Lower leg skin (tissue), 4 donors: ENCODE measurements at regions of chr19 and their contacts with region 1.

Region 1: GRCh38 chr19:19647037-19647835 is 3.8 kb upstream of the GMIP start:
- DNase-seq: no peak
- H3K4me3 ChIP-seq: no peak overlapping the region
- CTCF ChIP-seq: no peak
- POLR2A ChIP-seq: no peak

Region 2: GRCh38 chr19:19531951-19532805 is 115.1 kb before region 1 on chr19:
- intact Hi-C with region 1: loop called (anchors 2 kb)
- DNase-seq: peak; percentile 80 to 97
- H3K4me3 ChIP-seq: no peak overlapping the region
- CTCF ChIP-seq: peak in 1 of 3 donors; percentile 71
- POLR2A ChIP-seq: no peak

Region 3: DNA sequence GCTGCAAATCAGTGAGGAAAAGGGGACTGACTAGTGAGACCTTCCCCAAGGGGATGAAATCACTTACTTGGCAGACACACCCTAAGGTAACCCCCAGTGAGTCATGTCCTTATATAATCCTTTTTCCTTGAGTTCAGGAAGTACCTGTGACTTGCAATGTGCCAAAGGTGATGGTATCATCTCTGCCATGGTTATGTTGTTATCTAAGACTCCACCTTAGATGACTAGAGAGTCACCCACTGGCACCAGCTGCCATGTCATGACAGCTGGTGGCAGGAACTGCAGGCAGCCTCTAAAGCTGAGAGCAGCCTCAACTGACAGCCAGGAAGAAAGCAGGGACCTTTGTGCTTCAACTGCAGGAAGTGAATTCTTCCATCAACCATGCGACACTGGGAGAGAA is 41.2 kb before region 1 on chr19:
- intact Hi-C with region 1: no loop called
- DNase-seq: no peak
- H3K4me3 ChIP-seq: no peak overlapping the region
- CTCF ChIP-seq: no peak
- POLR2A ChIP-seq: no peak